Activated CD4-positive, alpha-beta T cell treated with anti-CD3 and anti-CD28 coated beads for 36 hours (primary cell): ENCODE measurements at regions of chr13 and their contacts with region 1.

Region 1: GRCh38 chr13:36981156-36981743 is 17.9 kb downstream of the ALG5 start:
- DNase-seq: no peak
- ATAC-seq: no peak
- H3K4me3 Mint-ChIP-seq: no peak overlapping the region
- H3K27ac Mint-ChIP-seq: no peak overlapping the region
- H3K4me1 Mint-ChIP-seq: no peaks in the 10 kb centered on the region
- H3K27me3 Mint-ChIP-seq: no peaks in the 10 kb centered on the region

Region 2: GRCh38 chr13:36420437-36420891 is 560.8 kb before region 1 on chr13:
- CTCF ChIA-PET with region 1: no interaction called
- POLR2A ChIA-PET with region 1: no interaction called
- intact Hi-C with region 1: loop called in 1 of 2 experiments (anchors 5 kb)
- DNase-seq: peak; percentile 82
- ATAC-seq: peak; percentile 74
- H3K4me3 Mint-ChIP-seq: no peak overlapping the region
- H3K27ac Mint-ChIP-seq: peak overlapping the region; percentile 75
- H3K4me1 Mint-ChIP-seq: peaks cover 27% of the 10 kb centered on the region
- H3K27me3 Mint-ChIP-seq: peaks cover 48% of the 10 kb centered on the region

Region 3: DNA sequence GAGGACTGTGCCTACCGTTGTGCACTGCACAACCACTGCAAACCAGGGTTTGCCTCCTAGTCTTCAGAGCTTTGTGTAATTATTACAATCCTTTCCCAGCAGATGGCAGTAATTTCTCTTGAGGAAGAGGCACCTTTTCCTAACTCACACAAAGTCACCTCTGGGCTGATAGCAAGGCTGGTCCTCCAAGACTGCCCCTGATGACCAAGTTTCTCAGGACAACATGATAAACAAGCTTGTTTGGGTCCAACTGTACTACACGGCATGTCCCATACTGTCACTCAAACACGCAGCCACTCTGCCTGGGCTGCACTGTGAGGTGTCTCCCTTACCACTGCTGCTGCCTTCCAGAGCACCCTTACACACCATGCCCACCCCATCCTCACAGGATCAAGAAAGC is 123.0 kb before region 1 on chr13:
- CTCF ChIA-PET with region 1: interaction called, 11 read pairs
- POLR2A ChIA-PET with region 1: no interaction called
- intact Hi-C with region 1: loop called in 1 of 2 experiments (anchors 1 kb)
- DNase-seq: no peak
- ATAC-seq: peak; percentile 64
- H3K4me3 Mint-ChIP-seq: no peak overlapping the region
- H3K27ac Mint-ChIP-seq: no peak overlapping the region
- H3K4me1 Mint-ChIP-seq: peaks cover 3% of the 10 kb centered on the region
- H3K27me3 Mint-ChIP-seq: peaks cover 23% of the 10 kb centered on the region

Region 4: DNA sequence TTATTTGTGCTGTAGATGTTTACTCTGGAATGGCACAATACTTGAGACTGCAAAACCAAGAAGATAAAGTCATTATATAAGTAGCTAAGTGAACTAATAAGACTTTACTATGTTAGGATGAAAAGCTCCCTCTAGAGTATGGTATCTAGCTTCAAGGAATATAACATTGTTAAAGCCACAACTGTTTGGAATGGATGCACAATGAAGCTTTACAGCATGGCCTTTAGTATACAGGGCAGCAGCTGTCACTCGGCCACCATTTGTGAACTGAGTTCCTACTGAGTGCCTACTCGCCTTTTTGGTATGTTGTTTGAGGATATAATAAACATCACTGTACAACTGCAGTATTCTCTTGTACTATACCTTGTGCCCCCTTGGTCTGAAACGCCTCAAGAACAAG is 11.1 kb after region 1 on chr13:
- CTCF ChIA-PET with region 1: interaction called, 10 read pairs
- POLR2A ChIA-PET with region 1: no interaction called
- intact Hi-C with region 1: no loop called
- DNase-seq: no peak
- ATAC-seq: no peak
- H3K4me3 Mint-ChIP-seq: no peak overlapping the region
- H3K27ac Mint-ChIP-seq: no peak overlapping the region
- H3K4me1 Mint-ChIP-seq: peaks cover 13% of the 10 kb centered on the region
- H3K27me3 Mint-ChIP-seq: no peaks in the 10 kb centered on the region